Motor neuron (in vitro differentiated cells): ENCODE measurements at regions of chr2 and their contacts with region 1.

Region 1: GRCh38 chr2:181715033-181715630 is 34.8 kb upstream of the NEUROD1 start:
- ATAC-seq: peak; percentile 69 to 88 (median 81)
- H3K4me3 ChIP-seq: no peak overlapping the region
- H3K27ac ChIP-seq: no peak overlapping the region
- H3K4me1 ChIP-seq: no peaks in the 10 kb centered on the region

Region 2: DNA sequence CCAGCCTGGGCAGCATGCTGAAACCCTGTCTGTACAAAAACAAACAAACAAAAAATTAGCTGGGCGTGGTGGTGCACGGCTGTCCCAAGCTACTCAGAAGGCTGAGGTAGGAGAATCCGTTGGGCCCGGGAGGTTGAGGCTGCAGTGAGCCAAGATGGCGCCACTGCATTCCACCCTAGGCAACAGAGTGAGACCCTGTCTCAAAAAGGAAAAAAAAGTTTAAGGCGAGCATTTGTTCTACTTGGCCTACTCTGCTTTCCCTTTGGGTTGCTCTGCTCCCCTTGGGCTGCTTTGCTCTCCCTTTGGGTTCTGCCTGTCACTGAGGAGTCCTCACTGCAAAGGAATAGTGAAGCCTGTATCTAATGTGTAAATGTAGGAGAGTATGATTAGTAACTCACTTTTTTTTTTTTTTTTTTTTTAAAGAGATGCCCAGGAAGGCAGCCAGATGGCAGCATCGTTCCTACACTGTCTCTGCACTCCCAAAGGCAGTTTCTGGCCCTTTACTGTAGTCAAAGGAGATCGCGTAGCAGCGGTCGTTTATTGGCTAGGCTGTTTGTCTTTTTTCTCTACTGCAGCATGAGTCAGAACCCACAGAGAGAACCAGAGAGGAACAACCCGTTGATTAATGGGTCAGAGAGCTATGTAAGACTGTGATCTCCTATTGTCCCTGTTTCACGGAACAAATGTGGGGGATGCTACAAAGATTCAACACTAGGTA is 1589.7 kb before region 1 on chr2:
- in situ Hi-C with region 1: loop called in 6 of 9 experiments (anchors 25 kb)
- ATAC-seq: peak; percentile 77 to 100 (median 99)
- H3K4me3 ChIP-seq: no peak overlapping the region
- H3K27ac ChIP-seq: no peak overlapping the region
- H3K4me1 ChIP-seq: peaks cover 7 to 8% of the 10 kb centered on the region in 2 donors

Region 3: GRCh38 chr2:181104512-181105115 is 610.5 kb before region 1 on chr2:
- in situ Hi-C with region 1: loop called in 7 of 9 experiments (anchors 25 kb)
- ATAC-seq: peak in 6 of 8 experiments; percentile 31 to 73 (median 44)
- H3K4me3 ChIP-seq: no peak overlapping the region
- H3K27ac ChIP-seq: no peak overlapping the region
- H3K4me1 ChIP-seq: peaks cover 0 to 7% of the 10 kb centered on the region in 2 donors

Region 4: GRCh38 chr2:181483876-181484275 is 231.3 kb before region 1 on chr2:
- in situ Hi-C with region 1: loop called in 1 of 9 experiments (anchors 25 kb)
- ATAC-seq: no peak
- H3K4me3 ChIP-seq: no peak overlapping the region
- H3K27ac ChIP-seq: no peak overlapping the region
- H3K4me1 ChIP-seq: peaks cover 0 to 28% of the 10 kb centered on the region in 2 donors

Region 5: DNA sequence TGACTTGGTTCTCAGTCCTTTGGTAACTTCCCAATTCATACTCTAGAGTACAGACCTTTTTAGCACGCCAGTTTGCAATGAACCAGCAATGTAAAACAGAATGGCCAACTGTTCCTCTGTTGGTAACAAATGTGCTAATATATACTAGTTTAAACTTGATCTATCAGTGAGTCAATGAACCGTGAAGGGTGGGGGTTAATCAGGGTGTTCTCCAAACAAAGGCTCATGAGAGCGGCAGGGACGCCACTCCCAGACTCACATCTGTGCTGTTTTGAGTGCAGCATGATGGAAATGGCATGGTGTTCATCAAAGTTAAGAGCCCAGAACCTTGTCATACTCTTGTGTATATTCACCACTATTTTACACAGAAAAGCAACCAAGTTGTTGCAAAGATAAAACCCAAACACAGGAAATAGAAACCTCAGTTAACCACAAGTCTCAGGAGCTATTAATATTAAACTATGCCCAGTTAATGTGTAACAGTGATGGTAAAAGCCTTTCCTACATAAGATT is 128.5 kb before region 1 on chr2:
- in situ Hi-C with region 1: loop called in 3 of 9 experiments (anchors 25 kb)
- ATAC-seq: peak in 6 of 8 experiments; percentile 63 to 100 (median 95)
- H3K4me3 ChIP-seq: no peak overlapping the region
- H3K27ac ChIP-seq: no peak overlapping the region
- H3K4me1 ChIP-seq: peaks cover 7 to 20% of the 10 kb centered on the region in 2 donors